Activated CD4-positive, alpha-beta memory T cell treated with anti-CD3 and anti-CD28 coated beads for 36 hours (primary cell): ENCODE measurements at regions of chr3 and their contacts with region 1.

Region 1: GRCh38 chr3:172087602-172088580 is 48.5 kb downstream of the FNDC3B start:
- DNase-seq: peak; percentile 35
- H3K4me3 Mint-ChIP-seq: no peak overlapping the region
- H3K27ac Mint-ChIP-seq: peak overlapping the region; percentile 55
- H3K4me1 Mint-ChIP-seq: peaks cover 47% of the 10 kb centered on the region
- H3K27me3 Mint-ChIP-seq: no peaks in the 10 kb centered on the region

Region 2: GRCh38 chr3:171591059-171591458 is 496.8 kb before region 1 on chr3:
- CTCF ChIA-PET with region 1: no interaction called
- POLR2A ChIA-PET with region 1: no interaction called
- intact Hi-C with region 1: no loop called
- DNase-seq: no peak
- H3K4me3 Mint-ChIP-seq: no peak overlapping the region
- H3K27ac Mint-ChIP-seq: no peak overlapping the region
- H3K4me1 Mint-ChIP-seq: no peaks in the 10 kb centered on the region
- H3K27me3 Mint-ChIP-seq: no peaks in the 10 kb centered on the region

Region 3: DNA sequence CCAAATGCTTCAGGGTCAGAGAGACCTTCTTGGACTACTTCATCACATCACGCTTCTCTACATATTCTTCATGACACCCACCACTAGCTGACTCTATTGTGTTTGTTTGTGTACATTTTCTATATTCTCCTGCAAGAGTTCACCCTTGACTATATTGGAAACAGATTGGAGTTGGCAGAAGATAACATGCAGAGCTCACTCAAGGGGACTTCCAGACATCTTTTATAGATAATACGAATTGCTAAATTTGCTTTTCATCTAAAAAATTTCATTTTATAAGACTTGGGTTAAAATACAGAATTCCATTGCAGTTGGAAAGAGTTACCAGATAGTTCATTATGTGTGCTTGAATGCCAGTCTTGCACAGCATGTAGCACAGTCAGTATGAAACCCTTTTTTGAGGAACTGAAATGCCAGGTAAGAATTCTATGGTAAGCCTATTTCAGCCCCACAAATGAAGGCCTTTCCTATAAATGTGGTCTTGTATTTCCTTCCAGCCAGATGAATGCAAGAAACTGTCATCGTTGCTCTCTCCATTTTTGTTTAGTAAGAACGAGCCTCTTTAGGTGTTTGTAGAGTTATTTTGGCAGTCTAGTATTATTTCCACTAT is 182.8 kb after region 1 on chr3:
- CTCF ChIA-PET with region 1: no interaction called
- POLR2A ChIA-PET with region 1: no interaction called
- intact Hi-C with region 1: no loop called
- DNase-seq: no peak
- H3K4me3 Mint-ChIP-seq: no peak overlapping the region
- H3K27ac Mint-ChIP-seq: no peak overlapping the region
- H3K4me1 Mint-ChIP-seq: no peaks in the 10 kb centered on the region
- H3K27me3 Mint-ChIP-seq: no peaks in the 10 kb centered on the region

Region 4: GRCh38 chr3:172321035-172321434 is 233.1 kb after region 1 on chr3:
- CTCF ChIA-PET with region 1: no interaction called
- POLR2A ChIA-PET with region 1: no interaction called
- intact Hi-C with region 1: loop called (anchors 5 kb)
- DNase-seq: no peak
- H3K4me3 Mint-ChIP-seq: no peak overlapping the region
- H3K27ac Mint-ChIP-seq: no peak overlapping the region
- H3K4me1 Mint-ChIP-seq: peaks cover 25% of the 10 kb centered on the region
- H3K27me3 Mint-ChIP-seq: no peaks in the 10 kb centered on the region